AG04450 (cell line): ENCODE measurements at regions of chr1 and their contacts with region 1.

Region 1: GRCh38 chr1:203340112-203340804 is 10.7 kb downstream of the FMOD start:
- DNase-seq: peak; percentile 55
- H3K4me3 ChIP-seq: no peak overlapping the region
- H3K27ac ChIP-seq: no peak overlapping the region
- H3K27me3 ChIP-seq: peaks cover 43% of the 10 kb centered on the region
- CTCF ChIP-seq: peak; percentile 87

Region 2: DNA sequence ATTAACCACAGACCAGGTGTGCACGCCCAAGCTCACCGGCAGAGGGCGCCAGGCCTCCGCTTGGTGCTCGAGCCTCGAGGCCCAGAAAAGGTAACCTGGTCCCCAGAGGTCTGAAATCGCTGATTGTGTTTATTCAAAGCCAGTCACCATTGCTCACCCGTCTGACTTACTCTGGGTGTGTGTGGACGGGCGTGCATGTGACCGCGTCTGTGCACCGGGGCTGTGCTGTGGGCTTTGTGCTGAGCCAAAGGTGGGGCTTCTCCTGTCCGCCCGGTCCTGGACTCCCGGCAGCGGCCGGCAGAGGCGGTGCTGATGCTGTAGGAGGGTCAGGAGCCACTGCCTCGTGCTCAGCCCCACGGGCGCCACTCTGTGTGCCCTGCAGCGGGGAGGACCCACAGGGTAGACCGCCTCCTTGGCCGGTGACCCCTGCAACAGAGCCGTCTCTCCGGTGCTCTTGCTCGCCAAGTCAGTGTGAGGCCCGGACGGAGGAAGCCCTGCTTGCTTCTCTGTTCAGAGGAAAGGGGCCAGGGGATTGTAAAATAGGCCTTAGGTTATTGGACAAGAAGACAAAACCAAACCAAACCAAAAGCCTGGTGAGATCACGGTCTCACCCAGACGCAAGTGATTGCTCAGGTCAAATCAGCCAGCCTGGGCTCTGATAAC is 66.9 kb before region 1 on chr1:
- CTCF ChIA-PET with region 1: interaction called, 244 read pairs
- POLR2A ChIA-PET with region 1: no interaction called
- DNase-seq: no peak
- H3K4me3 ChIP-seq: 0 out of 2 replicates have a peak overlapping the region, but pooled peaks have one; percentile 20
- H3K27ac ChIP-seq: no peak overlapping the region
- H3K27me3 ChIP-seq: peaks cover 9% of the 10 kb centered on the region
- CTCF ChIP-seq: peak; percentile 98

Region 3: DNA sequence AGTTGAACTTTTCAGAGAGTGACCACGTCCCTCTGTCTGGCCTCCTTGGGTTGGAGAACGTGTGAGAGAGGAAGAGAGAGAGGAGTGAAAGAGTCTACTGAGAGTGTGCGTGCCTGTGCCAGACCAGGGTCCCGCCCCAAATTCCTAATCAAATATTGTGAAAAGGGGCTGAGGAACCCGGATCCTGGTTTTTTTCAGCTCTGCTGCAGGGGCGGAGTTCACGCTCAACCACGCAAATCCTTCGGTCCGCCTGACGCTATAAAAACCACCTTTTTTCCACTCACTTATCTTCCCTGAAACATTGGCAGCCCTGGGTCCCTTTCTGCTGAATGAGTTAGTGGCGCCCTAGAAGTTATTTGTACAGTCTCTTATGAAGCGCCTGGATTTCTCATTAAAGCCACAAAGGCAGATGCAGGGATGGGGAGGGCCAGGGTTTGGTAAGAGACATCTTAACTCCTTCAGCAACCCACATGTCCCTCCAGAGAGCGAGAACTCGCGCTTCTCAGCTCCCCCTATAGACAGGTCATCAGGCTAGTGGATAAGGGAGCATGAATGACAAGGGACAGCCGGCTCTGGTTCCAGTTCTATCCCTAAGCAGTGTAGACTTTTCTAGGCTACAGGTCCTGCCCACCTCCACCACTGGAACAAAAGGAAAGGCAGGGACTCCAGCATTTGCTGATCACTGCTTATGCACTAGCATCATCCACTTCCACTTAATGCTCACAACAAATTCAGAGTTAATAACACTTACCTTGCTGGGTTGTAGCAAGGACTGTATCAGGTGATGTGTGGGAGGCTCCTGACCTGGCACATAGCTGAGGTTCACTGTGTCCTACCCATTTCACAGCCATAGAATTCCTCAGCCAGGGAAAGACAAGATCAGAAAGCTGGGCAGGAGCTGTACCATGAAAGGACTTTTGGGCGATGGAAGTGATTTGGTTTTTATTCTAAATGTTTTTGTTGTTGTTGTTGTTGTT is 11.1 kb after region 1 on chr1 and contains the start of gene FMOD:
- CTCF ChIA-PET with region 1: interaction called, 41 read pairs
- POLR2A ChIA-PET with region 1: interaction called, 4 read pairs
- DNase-seq: no peak
- H3K4me3 ChIP-seq: no peak within 1 kb of the TSS
- H3K27ac ChIP-seq: no peak within 1 kb of the TSS
- H3K27me3 ChIP-seq: peaks cover 25% of the 10 kb centered on the region
- CTCF ChIP-seq: no peak
- polyA plus RNA-seq, gene FMOD: 5.4 and 6.6 TPM in 2 replicates

Region 4: DNA sequence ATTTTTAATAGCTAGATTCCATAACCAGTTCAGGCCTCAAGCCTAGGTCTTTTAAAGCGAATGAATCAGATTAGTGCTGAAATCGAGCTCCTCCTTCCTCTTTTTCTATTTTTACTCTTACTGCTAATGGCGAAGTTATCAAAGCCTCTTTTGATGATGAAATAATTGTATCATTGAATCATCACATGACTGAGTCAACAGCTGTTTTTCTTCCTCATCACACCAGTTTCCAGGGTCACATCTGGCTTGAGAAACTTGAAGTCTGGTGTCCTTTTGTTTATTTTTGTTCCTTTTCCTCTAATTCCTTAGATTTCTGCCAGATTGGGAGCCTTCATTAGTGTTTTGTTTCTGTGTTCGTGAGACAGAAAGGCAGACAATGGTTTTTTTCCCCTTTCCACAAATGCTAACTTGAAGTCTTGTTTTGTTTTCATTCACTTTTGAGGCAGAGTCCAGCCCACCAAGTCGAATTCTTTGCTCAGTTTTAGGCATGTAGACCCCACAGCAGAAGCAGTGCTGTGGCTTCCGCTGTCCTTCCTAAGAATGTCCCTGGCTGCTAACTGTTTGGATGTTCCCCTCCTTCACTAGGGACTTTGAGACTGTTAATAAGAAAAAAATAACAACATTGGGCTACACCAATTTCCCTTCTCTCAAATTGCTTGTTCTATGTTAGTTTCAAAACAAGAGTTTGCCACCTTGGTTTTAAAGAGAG is 62.5 kb after region 1 on chr1:
- CTCF ChIA-PET with region 1: interaction called, 11 read pairs
- POLR2A ChIA-PET with region 1: no interaction called
- DNase-seq: peak; percentile 90
- H3K4me3 ChIP-seq: no peak overlapping the region
- H3K27ac ChIP-seq: peak overlapping the region; percentile 95
- H3K27me3 ChIP-seq: no peaks in the 10 kb centered on the region
- CTCF ChIP-seq: no peak

Region 5: DNA sequence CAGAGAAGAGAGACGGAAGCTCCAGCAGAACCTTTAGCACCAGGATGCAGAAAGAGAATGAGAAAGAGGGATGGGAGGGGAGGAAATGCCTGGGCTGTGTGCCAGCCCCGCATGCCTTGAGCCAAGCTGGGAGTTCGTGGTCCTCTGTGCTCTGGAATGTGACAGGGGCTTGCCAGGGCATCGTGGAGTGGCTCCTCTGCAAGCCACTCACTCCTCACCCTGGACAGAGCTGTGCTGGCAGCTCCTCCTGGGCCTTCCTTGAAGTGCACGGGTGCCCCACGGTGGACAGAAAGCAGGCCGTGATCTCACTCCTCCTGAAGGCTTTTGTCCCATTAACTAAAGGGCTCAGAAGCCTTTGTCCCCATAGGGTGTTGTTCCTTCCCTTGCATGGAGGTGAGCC is 100.5 kb after region 1 on chr1:
- CTCF ChIA-PET with region 1: interaction called, 145 read pairs
- POLR2A ChIA-PET with region 1: interaction called, 4 read pairs
- DNase-seq: peak; percentile 37
- H3K4me3 ChIP-seq: no peak overlapping the region
- H3K27ac ChIP-seq: no peak overlapping the region
- H3K27me3 ChIP-seq: peaks cover 44% of the 10 kb centered on the region
- CTCF ChIP-seq: peak; percentile 70

Region 6: DNA sequence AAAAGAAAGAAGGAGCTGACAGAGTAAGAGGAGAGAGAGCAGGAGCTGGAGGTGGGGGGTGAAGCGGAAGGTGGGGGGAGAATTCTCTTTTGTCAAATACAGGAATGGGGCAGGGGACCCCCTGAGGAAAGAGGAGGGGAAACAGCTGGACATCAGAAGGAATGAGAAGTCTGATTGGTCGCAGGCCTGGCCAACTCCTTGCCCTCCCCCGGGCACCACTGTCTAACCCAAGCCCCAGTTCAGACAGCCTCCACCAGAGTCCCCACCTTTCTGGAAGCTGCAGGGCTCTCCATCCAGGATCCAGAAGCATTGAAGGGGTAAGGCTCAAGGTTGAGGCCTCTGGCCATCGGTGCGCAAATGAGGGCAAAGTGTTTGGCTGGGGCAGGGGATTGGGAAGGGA is 153.6 kb after region 1 on chr1 and contains the start of gene OPTC:
- CTCF ChIA-PET with region 1: interaction called, 114 read pairs
- POLR2A ChIA-PET with region 1: no interaction called
- DNase-seq: no peak
- H3K4me3 ChIP-seq: no peak within 1 kb of the TSS
- H3K27ac ChIP-seq: no peak within 1 kb of the TSS
- H3K27me3 ChIP-seq: peaks cover 7% of the 10 kb centered on the region
- CTCF ChIP-seq: no peak
- polyA plus RNA-seq, gene OPTC: not detected in 2 replicates